A673 (cell line): ENCODE measurements at regions of chr13 and their contacts with region 1.

Region 1: GRCh38 chr13:107529035-107529434 is 686.3 kb downstream of the LIG4 start:
- DNase-seq: no peak
- H3K4me3 ChIP-seq: no peak overlapping the region
- H3K27ac ChIP-seq: no peak overlapping the region
- H3K4me1 ChIP-seq: peaks cover 4% of the 10 kb centered on the region
- H3K27me3 ChIP-seq: no peaks in the 10 kb centered on the region
- CTCF ChIP-seq: no peak

Region 2: DNA sequence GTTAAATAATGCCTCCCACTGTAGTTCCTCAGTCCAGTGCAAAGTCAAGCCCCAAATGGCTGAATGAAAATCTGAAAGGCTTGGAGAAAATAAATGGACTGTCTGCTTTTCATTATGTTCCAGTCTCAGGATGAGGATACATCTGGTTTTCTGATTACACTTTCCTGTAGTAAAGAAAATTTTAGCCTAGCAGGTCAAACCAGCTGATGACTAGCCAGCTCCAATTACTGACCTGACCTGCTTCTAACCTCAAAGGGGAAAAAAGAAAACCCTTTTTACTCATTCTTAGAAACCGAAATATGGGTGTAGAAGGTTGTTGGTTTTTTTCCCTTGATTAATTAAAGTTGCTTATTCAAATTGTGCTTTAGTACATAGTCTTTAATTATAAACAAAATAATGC is 1412.0 kb before region 1 on chr13:
- CTCF ChIA-PET with region 1: no interaction called
- POLR2A ChIA-PET with region 1: no interaction called
- intact Hi-C with region 1: no loop called
- DNase-seq: no peak
- H3K4me3 ChIP-seq: no peak overlapping the region
- H3K27ac ChIP-seq: no peak overlapping the region
- H3K4me1 ChIP-seq: no peaks in the 10 kb centered on the region
- H3K27me3 ChIP-seq: no peaks in the 10 kb centered on the region
- CTCF ChIP-seq: no peak

Region 3: DNA sequence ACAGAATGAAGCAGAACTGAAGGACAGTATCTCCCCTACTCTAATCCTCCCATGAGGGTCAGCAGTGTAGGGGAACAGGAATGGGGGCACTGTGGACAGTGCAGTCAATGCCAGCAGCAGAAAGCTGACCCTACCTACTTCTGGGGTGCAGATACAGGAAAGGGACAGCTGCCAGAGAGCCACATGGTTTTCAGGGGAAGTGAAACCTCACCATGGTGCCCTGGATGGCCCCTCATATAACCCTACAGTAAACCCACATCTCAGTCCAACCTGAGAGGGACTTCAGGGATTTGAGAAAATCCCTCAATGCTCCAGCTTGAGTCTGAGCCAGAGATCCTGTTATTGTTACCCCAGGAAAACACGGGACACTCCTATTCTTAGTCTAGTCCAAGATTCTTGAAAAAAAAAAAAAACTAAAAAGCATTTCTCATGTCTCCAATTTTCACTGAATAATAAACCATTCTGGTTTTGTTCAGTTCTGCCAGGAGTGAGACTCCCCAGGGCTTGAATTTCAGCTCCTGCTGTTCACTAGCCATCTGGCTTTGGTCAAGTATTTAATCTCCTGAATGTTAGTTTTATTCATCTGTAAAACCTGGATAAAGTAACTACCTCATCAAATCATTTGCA is 449.5 kb before region 1 on chr13:
- CTCF ChIA-PET with region 1: no interaction called
- POLR2A ChIA-PET with region 1: no interaction called
- intact Hi-C with region 1: no loop called
- DNase-seq: no peak
- H3K4me3 ChIP-seq: no peak overlapping the region
- H3K27ac ChIP-seq: no peak overlapping the region
- H3K4me1 ChIP-seq: no peaks in the 10 kb centered on the region
- H3K27me3 ChIP-seq: peaks cover 13% of the 10 kb centered on the region
- CTCF ChIP-seq: no peak

Region 4: DNA sequence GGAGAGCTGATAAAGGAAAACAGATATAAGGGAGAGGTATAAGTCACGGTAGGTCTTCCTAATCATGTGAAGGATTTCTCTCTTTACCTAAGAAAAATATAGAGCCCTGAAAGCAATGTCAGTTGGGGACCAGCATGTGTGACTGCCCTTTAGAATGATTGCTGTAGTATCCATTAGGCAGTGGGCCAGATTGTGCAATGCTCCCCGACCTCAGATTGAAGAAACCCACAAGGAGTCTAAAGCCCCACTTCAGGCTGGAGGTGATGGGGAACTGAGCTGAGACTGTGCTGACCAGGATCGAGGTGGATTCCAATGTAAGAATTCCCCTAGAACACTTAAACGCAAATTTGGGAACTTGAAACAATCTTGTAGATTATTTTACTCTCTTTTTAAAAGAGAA is 71.9 kb after region 1 on chr13:
- CTCF ChIA-PET with region 1: no interaction called
- POLR2A ChIA-PET with region 1: no interaction called
- intact Hi-C with region 1: no loop called
- DNase-seq: no peak
- H3K4me3 ChIP-seq: no peak overlapping the region
- H3K27ac ChIP-seq: no peak overlapping the region
- H3K4me1 ChIP-seq: no peaks in the 10 kb centered on the region
- H3K27me3 ChIP-seq: no peaks in the 10 kb centered on the region
- CTCF ChIP-seq: no peak

Region 5: DNA sequence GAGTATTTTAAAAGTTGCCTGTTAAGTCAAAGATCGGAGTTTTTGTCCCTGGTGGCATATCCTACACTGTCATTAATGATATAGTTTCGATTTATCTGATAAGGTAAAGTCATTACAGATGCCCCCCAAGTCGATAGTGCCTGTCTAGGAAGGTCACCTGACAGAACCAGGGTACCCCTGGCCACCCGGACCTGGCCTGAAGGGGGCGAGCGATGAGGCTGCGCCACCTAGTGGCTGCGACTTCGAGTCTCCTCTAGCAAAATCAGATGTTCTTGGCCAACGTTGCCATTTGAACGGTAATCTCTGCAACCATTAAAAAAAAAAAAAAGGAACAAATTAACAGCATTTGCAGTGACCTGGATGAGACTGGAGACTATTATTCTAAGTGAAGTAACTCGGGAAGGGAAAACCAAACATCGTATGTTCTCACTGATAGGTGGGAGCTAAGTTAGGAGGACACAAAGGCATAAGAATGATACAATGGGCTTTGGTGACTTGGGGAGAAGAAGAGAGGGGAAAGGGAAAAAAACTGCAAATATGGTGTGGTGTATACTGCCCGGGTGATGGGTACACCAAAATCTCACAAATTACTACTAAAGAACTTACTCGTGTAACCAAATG is 121.2 kb after region 1 on chr13:
- CTCF ChIA-PET with region 1: interaction called, 10 read pairs
- POLR2A ChIA-PET with region 1: no interaction called
- intact Hi-C with region 1: no loop called
- DNase-seq: peak; percentile 64
- H3K4me3 ChIP-seq: no peak overlapping the region
- H3K27ac ChIP-seq: no peak overlapping the region
- H3K4me1 ChIP-seq: no peaks in the 10 kb centered on the region
- H3K27me3 ChIP-seq: no peaks in the 10 kb centered on the region
- CTCF ChIP-seq: peak; percentile 95